AG04449 (cell line): ENCODE measurements at regions of chr1 and their contacts with region 1.

Region 1: GRCh38 chr1:218345673-218346390 is 696 bp downstream of the TGFB2 start:
- DNase-seq: no peak
- H3K4me3 ChIP-seq: peak overlapping the region; percentile 75
- CTCF ChIP-seq: no peak

Region 2: GRCh38 chr1:218480137-218480536 is 134.3 kb after region 1 on chr1:
- CTCF ChIA-PET with region 1: interaction called, 3 read pairs
- POLR2A ChIA-PET with region 1: interaction called, 19 read pairs
- DNase-seq: peak; percentile 89
- H3K4me3 ChIP-seq: no peak overlapping the region
- CTCF ChIP-seq: no peak